PC-3 (cell line): ENCODE measurements at regions of chr2 and their contacts with region 1.

Region 1: GRCh38 chr2:118723394-118723793 is 124.1 kb downstream of the EN1 start:
- DNase-seq: peak; percentile 92
- ATAC-seq: peak; percentile 61
- H3K4me3 ChIP-seq: peak overlapping the region; percentile 37; the same call in 1 of the 2 replicates
- H3K27ac ChIP-seq: peak overlapping the region; percentile 91
- H3K4me1 ChIP-seq: peaks cover 37% of the 10 kb centered on the region
- H3K27me3 ChIP-seq: no peaks in the 10 kb centered on the region
- CTCF ChIP-seq: no peak

Region 2: DNA sequence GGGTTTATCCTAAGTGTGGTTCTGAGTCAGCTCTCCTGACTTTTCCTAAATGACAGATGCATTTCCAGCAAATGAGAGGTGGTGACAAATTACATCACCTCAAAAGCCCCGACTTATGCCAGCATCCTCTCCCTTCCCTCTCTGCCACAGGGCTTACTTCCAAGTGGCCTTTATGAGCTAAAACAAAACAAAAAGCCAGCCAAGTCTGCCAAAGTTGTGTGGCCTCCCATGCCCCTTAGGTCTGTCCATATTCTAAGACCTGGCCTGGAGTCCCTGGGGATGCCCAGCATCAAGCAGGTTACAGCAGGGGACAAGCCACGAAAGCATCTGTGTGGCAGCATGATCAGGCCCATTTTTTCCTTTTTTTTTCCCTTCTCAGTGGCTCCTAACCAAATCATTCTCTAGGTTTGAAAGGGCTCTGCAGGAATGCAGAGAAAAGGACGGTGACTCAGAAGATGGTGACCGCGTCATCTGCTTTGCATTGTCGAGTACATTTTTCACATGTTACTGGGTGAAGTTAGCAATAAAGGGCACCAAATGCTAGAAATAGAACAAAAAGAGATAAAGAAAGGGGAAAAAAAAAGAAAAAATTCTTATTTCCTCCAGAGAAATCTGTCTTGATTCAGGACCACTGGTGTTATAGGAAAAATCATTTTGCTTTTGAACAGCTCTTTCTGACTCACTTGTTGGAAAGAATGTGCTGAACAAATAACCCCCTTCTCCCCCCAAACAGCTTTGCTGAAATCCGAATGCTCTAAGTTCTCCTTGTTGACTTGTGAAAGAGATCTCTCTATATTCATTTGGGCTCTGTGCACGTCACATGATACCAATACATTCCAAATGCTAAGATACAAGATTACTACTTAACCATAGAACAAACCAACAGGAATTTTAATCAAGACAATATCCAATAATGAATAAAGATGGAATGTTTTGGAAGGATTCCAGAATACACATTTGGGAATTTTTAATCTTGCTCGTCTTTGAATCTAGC is 54.7 kb before region 1 on chr2:
- CTCF ChIA-PET with region 1: no interaction called
- POLR2A ChIA-PET with region 1: no interaction called
- intact Hi-C with region 1: loop called (anchors 2 kb)
- DNase-seq: peak; percentile 91
- ATAC-seq: peak; percentile 89
- H3K4me3 ChIP-seq: peak overlapping the region; percentile 54
- H3K27ac ChIP-seq: peak overlapping the region; percentile 89
- H3K4me1 ChIP-seq: peaks cover 28% of the 10 kb centered on the region
- H3K27me3 ChIP-seq: no peaks in the 10 kb centered on the region
- CTCF ChIP-seq: no peak

Region 3: DNA sequence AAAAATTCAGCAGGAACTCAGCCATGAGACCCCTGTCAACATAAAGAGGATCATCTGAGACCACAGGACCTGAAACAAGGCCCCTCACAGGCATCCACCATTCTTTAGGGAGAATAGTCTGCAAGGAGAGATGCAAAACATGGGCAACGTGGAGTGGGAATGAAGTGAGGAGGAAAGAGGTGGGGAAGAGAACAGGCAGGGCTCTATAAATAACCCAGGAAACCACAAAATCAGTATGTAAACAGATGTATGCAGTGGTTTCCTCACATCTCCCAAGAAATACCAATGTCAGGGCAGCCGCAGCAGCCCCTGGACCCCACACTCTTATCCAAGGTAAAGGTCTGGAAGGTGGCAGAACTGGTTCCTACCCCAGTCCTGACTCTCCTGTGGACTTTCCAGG is 44.4 kb before region 1 on chr2:
- CTCF ChIA-PET with region 1: no interaction called
- POLR2A ChIA-PET with region 1: no interaction called
- intact Hi-C with region 1: no loop called
- DNase-seq: peak; percentile 36
- ATAC-seq: peak; percentile 53
- H3K4me3 ChIP-seq: no peak overlapping the region
- H3K27ac ChIP-seq: no peak overlapping the region
- H3K4me1 ChIP-seq: peaks cover 11% of the 10 kb centered on the region
- H3K27me3 ChIP-seq: no peaks in the 10 kb centered on the region
- CTCF ChIP-seq: no peak

Region 4: DNA sequence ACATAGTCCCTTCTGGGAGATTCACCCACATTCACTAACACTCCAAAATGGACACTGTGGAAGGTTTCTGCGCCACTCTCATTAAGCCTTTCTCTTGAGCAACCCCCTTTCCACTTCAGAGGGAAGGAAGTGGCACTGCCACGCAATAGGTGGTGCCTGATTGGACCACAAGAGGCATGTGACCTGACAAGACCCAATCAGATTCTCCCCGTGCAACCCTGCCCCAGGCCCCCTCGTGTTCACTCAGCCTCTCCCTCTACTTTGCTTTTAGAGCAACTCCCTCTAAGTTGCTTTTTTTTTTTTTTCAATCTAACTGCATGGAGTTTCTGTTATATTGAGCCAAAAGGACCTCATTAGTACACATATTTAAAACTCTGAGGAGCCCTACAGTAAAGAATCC is 33.9 kb before region 1 on chr2:
- CTCF ChIA-PET with region 1: no interaction called
- POLR2A ChIA-PET with region 1: no interaction called
- intact Hi-C with region 1: no loop called
- DNase-seq: no peak
- ATAC-seq: no peak
- H3K4me3 ChIP-seq: no peak overlapping the region
- H3K27ac ChIP-seq: no peak overlapping the region
- H3K4me1 ChIP-seq: peaks cover 16% of the 10 kb centered on the region
- H3K27me3 ChIP-seq: no peaks in the 10 kb centered on the region
- CTCF ChIP-seq: no peak

Region 5: GRCh38 chr2:118699447-118700215 is 23.8 kb before region 1 on chr2:
- CTCF ChIA-PET with region 1: no interaction called
- POLR2A ChIA-PET with region 1: no interaction called
- intact Hi-C with region 1: loop called (anchors 2 kb)
- DNase-seq: peak; percentile 78
- ATAC-seq: peak; percentile 84
- H3K4me3 ChIP-seq: no peak overlapping the region
- H3K27ac ChIP-seq: peak overlapping the region; percentile 79
- H3K4me1 ChIP-seq: peaks cover 48% of the 10 kb centered on the region
- H3K27me3 ChIP-seq: no peaks in the 10 kb centered on the region
- CTCF ChIP-seq: no peak

Region 6: DNA sequence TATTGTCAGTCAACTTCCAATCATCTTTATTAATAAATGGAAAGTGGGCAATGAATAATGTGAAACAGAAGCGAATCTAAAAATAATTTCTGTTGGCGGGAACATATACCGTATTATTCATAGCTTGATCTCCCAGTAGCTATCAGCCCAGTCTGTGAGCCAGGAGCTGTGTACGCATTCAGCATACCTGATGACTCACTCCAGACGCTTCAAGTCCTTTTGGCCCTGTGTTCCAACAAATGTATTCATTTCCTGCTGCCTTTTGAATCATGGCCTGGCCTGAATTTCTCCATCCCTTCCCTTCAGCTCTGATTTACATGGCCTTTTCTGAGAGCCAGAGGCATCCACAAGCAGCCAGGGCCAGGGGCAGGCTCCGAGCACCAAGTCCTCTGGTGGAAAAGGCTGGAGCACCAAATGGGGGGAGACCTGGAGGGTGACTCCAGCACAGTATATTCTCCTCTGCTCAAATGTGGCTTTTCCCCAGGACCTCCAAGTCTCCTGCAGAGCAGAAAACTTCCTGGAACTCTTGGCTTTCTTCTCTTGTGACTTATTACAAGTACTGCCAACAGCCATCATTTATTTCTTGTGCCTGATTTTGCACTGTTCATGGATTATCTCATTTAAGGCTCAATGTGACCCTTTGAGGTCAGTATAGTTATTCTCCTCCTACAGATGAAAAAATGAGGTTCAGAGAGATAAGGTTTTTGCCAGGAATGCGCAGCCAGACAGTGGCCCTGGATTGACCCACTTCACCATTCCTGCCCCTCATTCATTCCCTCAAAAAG is 15.3 kb after region 1 on chr2:
- CTCF ChIA-PET with region 1: no interaction called
- POLR2A ChIA-PET with region 1: no interaction called
- intact Hi-C with region 1: loop called (anchors 2 kb)
- DNase-seq: peak; percentile 95
- ATAC-seq: peak; percentile 100
- H3K4me3 ChIP-seq: no peak overlapping the region
- H3K27ac ChIP-seq: peak overlapping the region; percentile 83
- H3K4me1 ChIP-seq: peaks cover 15% of the 10 kb centered on the region
- H3K27me3 ChIP-seq: no peaks in the 10 kb centered on the region
- CTCF ChIP-seq: no peak

Region 7: DNA sequence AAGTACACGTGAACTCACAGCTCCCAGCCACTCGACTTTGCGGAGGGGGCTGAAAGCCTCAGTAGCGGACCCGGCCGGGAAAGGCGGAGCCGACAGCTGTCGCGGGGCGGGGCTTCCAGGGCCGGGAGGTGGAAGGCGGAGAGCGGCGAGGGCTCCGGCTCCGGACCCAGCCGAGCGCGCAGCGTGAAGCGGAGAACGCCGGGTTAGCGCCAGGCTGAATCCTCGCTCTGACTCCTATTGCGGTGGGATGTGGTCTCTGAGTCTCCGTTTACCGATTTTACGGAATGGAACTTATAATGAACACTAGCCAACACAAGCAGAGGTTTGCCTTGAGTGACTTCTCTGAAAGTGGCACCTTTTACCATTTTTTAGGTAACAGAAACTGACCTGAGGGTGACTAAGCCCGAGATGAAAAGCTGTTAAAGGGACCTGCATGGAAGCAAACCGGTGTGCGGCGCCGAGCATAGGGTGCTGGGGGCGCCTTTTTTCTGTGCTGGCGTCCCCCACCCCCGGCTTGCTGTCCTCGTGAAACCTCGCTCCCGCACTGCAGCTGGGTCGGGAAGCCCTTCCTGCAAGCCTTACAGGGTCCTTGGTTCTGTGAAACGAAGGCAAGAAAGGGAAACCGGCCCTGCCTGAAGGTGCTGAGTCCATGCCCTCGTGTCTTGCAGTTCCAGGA is 51.2 kb after region 1 on chr2:
- CTCF ChIA-PET with region 1: no interaction called
- POLR2A ChIA-PET with region 1: no interaction called
- intact Hi-C with region 1: loop called (anchors 2 kb)
- DNase-seq: peak; percentile 60
- ATAC-seq: peak; percentile 96
- H3K4me3 ChIP-seq: peak overlapping the region; percentile 66
- H3K27ac ChIP-seq: no peak overlapping the region
- H3K4me1 ChIP-seq: peaks cover 6% of the 10 kb centered on the region; the same call in 1 of the 2 replicates
- H3K27me3 ChIP-seq: no peaks in the 10 kb centered on the region
- CTCF ChIP-seq: no peak

Region 8: GRCh38 chr2:118847497-118848172 is 124.2 kb after region 1 on chr2 and contains the start of gene EN1:
- CTCF ChIA-PET with region 1: no interaction called
- POLR2A ChIA-PET with region 1: no interaction called
- intact Hi-C with region 1: loop called (anchors 5 kb)
- DNase-seq: peak; percentile 79
- ATAC-seq: peak; percentile 50
- H3K4me3 ChIP-seq: peak within 1 kb of the TSS; percentile 66
- H3K27ac ChIP-seq: no peak within 1 kb of the TSS
- H3K4me1 ChIP-seq: no peaks in the 10 kb centered on the region
- H3K27me3 ChIP-seq: peaks cover 16% of the 10 kb centered on the region; the same call in 1 of the 2 replicates
- CTCF ChIP-seq: no peak
- total RNA-seq, gene EN1: 2.3 and 3.2 TPM in 2 replicates